Psoas muscle (tissue), 8 donors: ENCODE measurements at regions of chr17 and their contacts with region 1.

Region 1: GRCh38 chr17:1661045-1661444 is 11.4 kb upstream of the RILP start:
- DNase-seq: no peak
- ATAC-seq: no peak
- H3K4me3 ChIP-seq: no peak overlapping the region
- H3K27ac ChIP-seq: no peak overlapping the region
- H3K4me1 ChIP-seq: no peaks in the 10 kb centered on the region
- H3K27me3 ChIP-seq: no peaks in the 10 kb centered on the region
- CTCF ChIP-seq: no peak

Region 2: DNA sequence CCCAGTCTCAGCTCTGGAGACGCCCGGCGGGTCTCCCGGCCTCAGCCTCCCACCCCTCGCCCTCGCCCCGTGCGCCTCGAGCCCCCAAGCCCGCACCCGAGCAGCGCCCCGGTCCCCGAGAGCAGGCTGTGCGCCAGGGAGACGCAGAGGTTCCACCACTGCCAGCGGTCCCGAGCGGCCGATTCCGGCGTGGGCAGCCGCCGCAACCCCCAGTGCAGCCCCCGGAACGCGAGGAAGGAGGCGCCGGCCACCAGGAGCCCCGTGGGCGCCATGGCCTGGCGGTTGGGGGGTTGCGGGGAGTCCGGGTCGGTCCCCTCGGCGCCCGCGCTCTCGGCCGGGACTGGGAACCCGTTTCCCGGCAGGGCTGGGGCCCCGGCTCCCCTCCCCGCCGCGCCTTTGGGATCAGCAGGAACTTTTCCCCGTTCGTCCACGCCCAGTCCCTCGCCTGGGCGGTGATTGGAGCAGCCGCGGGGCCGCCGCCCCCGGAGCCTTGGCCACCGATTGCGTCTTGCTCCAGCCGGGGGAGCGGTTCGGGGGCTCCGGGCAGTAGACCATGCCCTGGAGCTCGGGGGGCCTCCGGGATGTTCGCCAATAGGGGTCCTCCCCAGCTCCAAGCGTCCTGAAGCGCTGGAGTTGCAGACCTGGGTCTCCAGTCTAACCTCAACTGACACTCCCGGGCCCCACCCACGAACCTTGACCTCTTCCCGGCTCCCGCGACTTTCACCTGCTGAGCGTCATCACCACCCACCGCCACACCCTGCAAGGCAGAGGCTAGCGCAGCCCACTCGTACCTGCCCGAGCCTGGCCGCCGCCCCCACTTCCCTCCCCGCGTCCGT is 49.1 kb after region 1 on chr17 and contains the start of gene TLCD2:
- intact Hi-C with region 1: no loop called
- DNase-seq: peak; percentile 83 to 85
- ATAC-seq: peak; percentile 26 to 47 (median 34)
- H3K4me3 ChIP-seq: peak within 1 kb of the TSS; percentile 97
- H3K27ac ChIP-seq: peak within 1 kb of the TSS; percentile 71
- H3K4me1 ChIP-seq: peaks cover 37% of the 10 kb centered on the region
- H3K27me3 ChIP-seq: no peaks in the 10 kb centered on the region
- CTCF ChIP-seq: no peak
- total RNA-seq, gene TLCD2: 1.6 to 2.9 (median 1.9) TPM

Region 3: GRCh38 chr17:2309338-2310154 is 648.5 kb after region 1 on chr17:
- intact Hi-C with region 1: loop called in 1 of 2 experiments (anchors 10 kb)
- DNase-seq: no peak
- ATAC-seq: no peak
- H3K4me3 ChIP-seq: no peak overlapping the region
- H3K27ac ChIP-seq: no peak overlapping the region
- H3K4me1 ChIP-seq: no peaks in the 10 kb centered on the region
- H3K27me3 ChIP-seq: no peaks in the 10 kb centered on the region
- CTCF ChIP-seq: no peak